Activated CD8-positive, alpha-beta memory T cell treated with anti-CD3 and anti-CD28 coated beads, Interleukin-2, amount 10 ng/mL, durations not matched to agents 7 days and 5 days (primary cell): ENCODE measurements at regions of chr11 and their contacts with region 1.

Region 1: DNA sequence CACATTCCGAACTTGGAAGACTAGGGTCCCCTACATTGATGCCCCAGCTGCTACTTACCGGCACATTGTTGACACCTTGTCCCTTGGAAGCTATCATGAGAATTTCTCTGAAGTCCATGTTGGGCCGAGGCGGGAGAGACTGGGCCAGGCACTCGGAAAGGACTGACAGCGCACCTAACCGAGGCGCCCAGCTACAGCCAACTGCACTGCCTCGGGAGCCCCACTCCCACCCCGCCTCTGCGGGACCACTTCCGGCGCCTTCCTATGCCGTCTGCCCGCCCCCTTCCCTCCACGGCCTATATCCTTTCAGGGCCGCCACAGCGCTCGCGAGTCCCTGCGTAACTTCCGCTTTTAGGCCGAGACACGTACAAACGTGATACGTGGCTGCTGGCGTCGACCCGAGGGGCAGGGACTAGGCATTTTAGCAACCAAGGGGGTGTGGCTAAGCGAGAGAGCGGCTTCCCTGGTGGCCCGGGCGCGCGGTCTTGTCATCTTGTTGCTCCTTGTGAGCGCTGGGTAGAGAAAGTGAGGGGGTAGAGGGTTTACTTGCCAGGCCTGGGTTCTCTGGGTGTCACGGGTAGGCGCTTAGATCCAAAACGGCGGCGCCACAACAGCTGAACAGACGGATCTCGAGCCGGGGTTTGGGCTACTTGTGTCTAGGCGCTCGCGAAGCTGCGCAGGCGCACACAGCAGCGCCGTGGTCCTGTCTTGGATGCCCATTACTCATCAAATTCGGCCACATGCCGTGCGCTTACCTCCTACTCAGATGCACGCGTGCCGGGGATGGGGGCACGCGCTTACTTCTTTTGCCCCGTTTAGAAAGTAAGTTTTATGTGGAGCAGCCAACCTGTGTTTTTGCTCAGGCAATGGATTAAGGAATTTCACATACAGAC is at the start of gene SPTY2D1:
- DNase-seq: peak; percentile 100
- ATAC-seq: peak; percentile 91
- H3K4me3 Mint-ChIP-seq: peak within 1 kb of the TSS; percentile 97
- H3K27ac Mint-ChIP-seq: peak within 1 kb of the TSS; percentile 99
- H3K4me1 Mint-ChIP-seq: peaks cover 23% of the 10 kb centered on the region
- H3K27me3 Mint-ChIP-seq: no peaks in the 10 kb centered on the region
- total RNA-seq, gene SPTY2D1: 23.8 to 34.7 TPM

Region 2: DNA sequence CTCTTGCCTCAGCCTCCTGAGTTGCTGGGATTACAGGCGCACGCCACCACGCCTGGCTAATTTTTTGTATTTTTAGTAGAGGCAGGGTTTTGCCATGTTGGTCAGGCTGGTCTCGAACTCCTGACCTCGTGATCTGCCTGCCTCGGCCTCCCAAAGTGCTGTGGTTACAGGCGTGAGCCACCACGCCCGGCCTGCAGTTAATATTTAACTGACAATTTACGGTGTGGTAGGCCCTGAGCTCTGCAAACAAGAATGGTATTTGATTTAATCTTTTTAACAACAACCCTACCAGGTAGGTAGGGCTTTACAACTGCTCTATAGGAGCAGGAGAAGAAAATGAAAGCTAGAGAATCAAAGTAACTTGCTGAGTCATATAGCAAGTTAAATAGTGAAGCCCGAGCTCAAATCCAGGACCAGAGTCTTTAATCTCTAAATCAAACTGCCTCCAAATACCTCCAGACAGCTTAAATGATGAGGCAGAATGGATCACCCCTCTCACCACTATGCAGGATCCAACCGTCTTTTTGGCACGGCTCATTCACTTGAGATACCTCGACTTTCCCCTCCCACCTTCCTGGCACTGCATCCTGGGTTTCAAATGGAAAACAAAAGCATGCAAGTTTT is 55.3 kb before region 1 on chr11:
- CTCF ChIA-PET with region 1: interaction called, 10 read pairs
- DNase-seq: peak; percentile 52
- ATAC-seq: peak; percentile 93
- H3K4me3 Mint-ChIP-seq: peak overlapping the region; percentile 64
- H3K27ac Mint-ChIP-seq: peak overlapping the region; percentile 83
- H3K4me1 Mint-ChIP-seq: peaks cover 36% of the 10 kb centered on the region
- H3K27me3 Mint-ChIP-seq: no peaks in the 10 kb centered on the region

Region 3: DNA sequence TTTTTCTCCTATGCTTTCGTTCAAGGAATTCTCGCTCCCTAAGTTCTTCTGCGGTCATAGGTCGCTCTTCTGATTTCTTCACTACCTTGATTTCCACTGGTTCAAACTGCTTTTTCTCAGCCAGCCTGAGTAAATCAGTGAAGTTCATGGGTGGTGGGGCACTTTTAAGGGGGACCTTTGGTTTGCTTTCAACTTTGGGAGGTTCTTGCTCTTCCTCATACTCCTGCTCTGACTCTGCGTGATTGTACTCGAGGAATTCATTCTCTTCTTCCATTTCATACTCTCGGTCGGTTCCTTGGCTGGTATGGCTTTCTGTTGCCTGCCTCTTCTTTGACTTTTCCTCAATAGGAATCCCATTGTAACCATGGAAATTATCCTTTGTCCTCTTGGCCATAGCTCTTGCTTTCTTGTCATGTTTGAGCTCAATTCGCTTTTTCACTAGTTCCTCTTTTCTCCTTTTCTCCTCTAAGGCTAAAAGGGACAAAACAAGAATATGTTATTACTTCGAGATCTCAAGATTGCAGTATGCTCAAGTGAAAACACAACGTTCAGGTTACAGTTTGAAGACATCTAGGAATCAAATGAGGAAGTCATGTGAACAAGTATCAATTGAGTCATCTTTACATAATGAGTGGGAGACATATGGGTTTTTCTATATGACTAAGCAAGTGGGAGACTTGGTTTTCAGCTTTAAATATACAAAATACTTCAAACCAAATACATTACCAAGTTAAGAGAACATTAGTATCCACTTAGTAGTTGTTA is 18.6 kb before region 1 on chr11:
- CTCF ChIA-PET with region 1: interaction called, 16 read pairs
- DNase-seq: no peak
- ATAC-seq: peak; percentile 79
- H3K4me3 Mint-ChIP-seq: peak overlapping the region; percentile 8
- H3K27ac Mint-ChIP-seq: peak overlapping the region; percentile 83
- H3K4me1 Mint-ChIP-seq: peaks cover 46% of the 10 kb centered on the region
- H3K27me3 Mint-ChIP-seq: no peaks in the 10 kb centered on the region

Region 4: DNA sequence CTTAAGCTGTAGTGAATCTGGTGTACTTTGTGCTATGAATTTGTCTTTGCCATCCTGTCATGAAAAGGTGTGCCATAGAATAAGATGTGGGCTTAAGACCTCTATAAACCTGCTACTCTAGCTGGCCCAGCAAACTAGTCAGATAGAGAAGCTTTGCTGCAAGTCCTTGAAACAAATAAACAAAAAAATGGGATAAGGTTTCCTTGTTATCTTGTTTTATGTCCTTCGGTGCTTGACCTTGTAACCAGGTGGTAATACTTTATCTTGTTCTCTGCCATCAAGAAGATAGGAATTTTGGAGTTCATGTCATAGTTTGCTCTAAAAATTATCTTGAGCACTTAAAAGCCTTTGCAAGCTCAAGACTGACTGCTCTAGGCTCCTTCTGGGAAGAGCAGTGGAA is 49.9 kb after region 1 on chr11:
- CTCF ChIA-PET with region 1: no interaction called
- DNase-seq: no peak
- ATAC-seq: no peak
- H3K4me3 Mint-ChIP-seq: no peak overlapping the region
- H3K27ac Mint-ChIP-seq: no peak overlapping the region
- H3K4me1 Mint-ChIP-seq: no peaks in the 10 kb centered on the region
- H3K27me3 Mint-ChIP-seq: peaks cover 4% of the 10 kb centered on the region